Aorta (tissue), 5 donors: ENCODE measurements at regions of chr11 and their contacts with region 1.

Region 1: GRCh38 chr11:102216433-102217075 is 100.7 kb upstream of the BIRC3 start:
- DNase-seq: no peak
- ATAC-seq: peak; percentile 70
- H3K4me3 ChIP-seq: peak overlapping the region in 1 of 2 donors; percentile 10
- H3K27ac ChIP-seq: peak overlapping the region; percentile 57 to 82
- H3K4me1 ChIP-seq: peaks cover 0 to 4% of the 10 kb centered on the region in 2 donors
- H3K27me3 ChIP-seq: no peaks in the 10 kb centered on the region

Region 2: DNA sequence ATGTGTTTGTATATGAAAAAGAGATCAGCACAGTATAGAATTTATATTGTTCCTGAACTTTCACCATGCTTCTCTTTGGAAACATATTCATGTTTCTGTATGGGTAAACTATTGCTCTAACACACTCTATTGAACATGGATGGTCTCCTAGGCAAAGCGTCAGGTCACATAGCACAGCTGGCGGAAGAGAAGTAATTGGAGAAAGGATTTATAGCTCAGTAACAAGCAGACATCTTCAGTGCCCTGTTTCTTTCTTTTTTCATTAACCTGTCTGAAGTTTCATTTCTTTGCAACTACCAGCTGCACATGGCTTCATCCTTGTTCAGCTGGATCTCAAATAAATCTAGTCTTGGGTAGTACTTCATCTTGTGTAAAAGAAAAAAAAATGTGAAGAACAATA is 548.3 kb before region 1 on chr11:
- intact Hi-C with region 1: no loop called
- DNase-seq: no peak
- ATAC-seq: no peak
- H3K4me3 ChIP-seq: no peak overlapping the region
- H3K27ac ChIP-seq: no peak overlapping the region
- H3K4me1 ChIP-seq: no peaks in the 10 kb centered on the region
- H3K27me3 ChIP-seq: peaks cover 0 to 2% of the 10 kb centered on the region in 2 donors

Region 3: DNA sequence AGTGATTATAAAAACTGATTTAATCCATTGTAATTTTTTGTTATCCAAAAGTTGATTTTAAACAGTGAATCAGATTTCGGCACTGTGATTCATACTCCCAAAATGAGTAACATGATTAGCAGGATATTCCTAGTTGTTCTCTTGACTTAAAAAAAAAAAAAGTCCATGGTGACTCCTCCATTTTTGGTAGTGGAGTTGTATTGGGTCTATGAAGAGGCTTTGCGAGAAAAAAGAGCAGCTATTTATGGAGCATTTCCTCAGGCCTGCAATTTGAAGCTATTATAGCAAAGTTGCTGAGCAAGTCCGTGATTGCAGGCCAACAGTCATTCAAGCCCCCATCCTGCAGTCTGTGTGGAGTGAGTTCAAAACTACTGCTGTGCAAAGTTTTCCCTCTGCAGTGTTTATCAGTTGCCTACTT is 77.5 kb before region 1 on chr11:
- intact Hi-C with region 1: loop called in 1 of 2 experiments (anchors 5 kb)
- DNase-seq: peak in 1 of 2 donors; percentile 55
- ATAC-seq: peak; percentile 91
- H3K4me3 ChIP-seq: peak overlapping the region in 1 of 2 donors; percentile 18
- H3K27ac ChIP-seq: peak overlapping the region; percentile 63 to 90
- H3K4me1 ChIP-seq: peaks cover 6 to 8% of the 10 kb centered on the region in 2 donors
- H3K27me3 ChIP-seq: no peaks in the 10 kb centered on the region

Region 4: DNA sequence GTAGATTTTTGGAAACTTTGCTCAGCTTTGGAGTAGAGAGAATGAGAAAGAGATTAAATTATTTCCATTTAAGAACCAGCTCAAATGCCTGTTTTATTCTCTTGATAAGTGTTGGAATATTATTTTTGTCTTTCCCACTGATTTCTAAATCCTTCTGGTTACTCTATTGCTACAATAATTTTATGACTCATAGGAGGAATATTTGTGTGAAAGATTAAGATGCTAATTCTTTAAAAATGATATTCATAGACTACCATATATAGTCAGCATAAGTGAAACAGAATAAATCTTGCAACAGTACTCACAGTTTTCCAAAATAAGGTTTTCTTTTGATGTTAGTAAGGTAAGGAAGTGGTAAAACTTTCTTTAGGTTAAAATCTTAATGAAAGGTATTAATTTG is 45.5 kb before region 1 on chr11:
- intact Hi-C with region 1: loop called (anchors 5 kb)
- DNase-seq: no peak
- ATAC-seq: peak; percentile 77
- H3K4me3 ChIP-seq: peak overlapping the region in 1 of 2 donors; percentile 34
- H3K27ac ChIP-seq: no peak overlapping the region
- H3K4me1 ChIP-seq: peaks cover 0 to 9% of the 10 kb centered on the region in 2 donors
- H3K27me3 ChIP-seq: no peaks in the 10 kb centered on the region

Region 5: GRCh38 chr11:102177974-102178631 is 38.5 kb before region 1 on chr11:
- intact Hi-C with region 1: loop called (anchors 5 kb)
- DNase-seq: no peak
- ATAC-seq: peak; percentile 86
- H3K4me3 ChIP-seq: no peak overlapping the region
- H3K27ac ChIP-seq: peak overlapping the region; percentile 75 to 82
- H3K4me1 ChIP-seq: peaks cover 1 to 2% of the 10 kb centered on the region in 2 donors
- H3K27me3 ChIP-seq: no peaks in the 10 kb centered on the region